ENCODE measurements at regions of chr14 and their contacts with region 1.

Region 1: GRCh38 chr14:103078093-103078749 is 5.8 kb upstream of the LBHD2 start:
- DNase-seq: peak; percentile 83
- H3K4me3 ChIP-seq: no peak overlapping the region
- H3K27ac ChIP-seq: no peak overlapping the region
- H3K4me1 ChIP-seq: peaks cover 4% of the 10 kb centered on the region
- CTCF ChIP-seq: peak; percentile 80

Region 2: DNA sequence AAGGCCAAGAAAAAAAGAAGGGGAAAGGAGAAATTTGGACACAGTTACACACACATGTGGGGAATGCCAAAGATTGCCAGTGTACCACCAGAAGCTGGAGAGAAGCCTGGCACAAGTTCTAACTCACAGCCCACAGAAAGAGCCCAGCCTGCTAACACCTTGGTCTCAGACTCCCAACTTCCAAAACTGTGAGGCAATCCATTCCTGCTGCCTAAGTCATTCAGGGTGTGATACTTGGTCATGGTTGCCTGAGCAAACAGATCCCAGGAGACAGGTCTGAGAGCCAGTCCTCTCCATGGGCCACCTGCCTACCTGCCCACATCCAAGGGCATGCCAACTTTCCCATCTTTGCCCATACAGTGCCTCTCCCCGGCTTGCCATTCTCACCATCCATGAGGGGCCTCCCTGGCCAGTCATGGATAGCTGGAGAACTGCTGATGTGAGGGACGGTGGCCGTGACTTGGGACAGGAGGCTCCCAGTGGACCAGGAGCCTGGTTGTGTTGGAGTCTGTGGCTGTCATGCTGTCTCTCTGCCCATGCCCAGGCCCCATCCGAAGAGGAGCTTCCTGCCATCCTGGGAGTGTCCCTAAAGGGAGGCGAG is 1976.7 kb before region 1 on chr14:
- CTCF ChIA-PET with region 1: no interaction called
- POLR2A ChIA-PET with region 1: no interaction called
- intact Hi-C with region 1: no loop called
- DNase-seq: no peak
- H3K4me3 ChIP-seq: no peak overlapping the region
- H3K27ac ChIP-seq: no peak overlapping the region
- H3K4me1 ChIP-seq: no peaks in the 10 kb centered on the region
- CTCF ChIP-seq: no peak

Region 3: GRCh38 chr14:103104654-103105452 is 26.6 kb after region 1 on chr14:
- CTCF ChIA-PET with region 1: interaction called, 5 read pairs
- POLR2A ChIA-PET with region 1: interaction called, 9 read pairs
- intact Hi-C with region 1: loop called (anchors 1 kb)
- DNase-seq: peak; percentile 66
- H3K4me3 ChIP-seq: peak overlapping the region; percentile 13
- H3K27ac ChIP-seq: peak overlapping the region; percentile 62
- H3K4me1 ChIP-seq: peaks cover 34% of the 10 kb centered on the region
- CTCF ChIP-seq: peak; percentile 92

Region 4: DNA sequence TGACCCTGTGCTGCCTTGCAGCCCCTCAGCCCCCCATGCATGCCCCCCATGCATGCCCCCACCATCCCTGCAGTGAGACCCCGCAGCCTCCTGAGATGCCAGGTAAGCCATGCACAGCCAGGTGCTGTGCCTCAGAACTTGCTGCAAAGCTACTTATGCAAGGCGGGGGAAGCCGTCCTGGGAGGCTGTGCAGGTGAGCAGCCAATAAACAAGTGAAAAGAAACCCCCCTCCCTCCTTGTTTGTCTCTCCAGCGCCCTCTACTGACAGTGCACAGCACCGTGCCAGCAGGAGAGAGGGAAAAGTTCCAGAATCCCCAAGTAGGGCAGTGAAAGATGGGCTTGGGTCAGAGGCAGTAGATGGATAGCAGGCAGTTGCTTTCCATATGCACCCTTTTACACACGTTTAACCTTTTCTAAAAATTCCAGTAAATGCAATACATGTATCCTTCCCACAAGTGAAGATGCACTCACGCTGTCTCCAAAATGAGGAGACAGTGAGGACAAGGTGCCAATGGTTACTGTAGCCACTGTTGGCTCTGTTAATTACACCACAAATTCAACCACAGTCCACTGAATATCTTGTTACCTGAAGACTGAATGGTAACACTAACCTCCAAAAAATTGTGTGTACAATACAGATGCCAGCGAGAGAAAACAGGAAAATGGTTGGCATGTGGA is 63.0 kb after region 1 on chr14:
- CTCF ChIA-PET with region 1: no interaction called
- POLR2A ChIA-PET with region 1: no interaction called
- intact Hi-C with region 1: loop called (anchors 1 kb)
- DNase-seq: peak; percentile 91
- H3K4me3 ChIP-seq: peak overlapping the region; percentile 58
- H3K27ac ChIP-seq: peak overlapping the region; percentile 91
- H3K4me1 ChIP-seq: peaks cover 34% of the 10 kb centered on the region
- CTCF ChIP-seq: peak; percentile 96

Region 5: DNA sequence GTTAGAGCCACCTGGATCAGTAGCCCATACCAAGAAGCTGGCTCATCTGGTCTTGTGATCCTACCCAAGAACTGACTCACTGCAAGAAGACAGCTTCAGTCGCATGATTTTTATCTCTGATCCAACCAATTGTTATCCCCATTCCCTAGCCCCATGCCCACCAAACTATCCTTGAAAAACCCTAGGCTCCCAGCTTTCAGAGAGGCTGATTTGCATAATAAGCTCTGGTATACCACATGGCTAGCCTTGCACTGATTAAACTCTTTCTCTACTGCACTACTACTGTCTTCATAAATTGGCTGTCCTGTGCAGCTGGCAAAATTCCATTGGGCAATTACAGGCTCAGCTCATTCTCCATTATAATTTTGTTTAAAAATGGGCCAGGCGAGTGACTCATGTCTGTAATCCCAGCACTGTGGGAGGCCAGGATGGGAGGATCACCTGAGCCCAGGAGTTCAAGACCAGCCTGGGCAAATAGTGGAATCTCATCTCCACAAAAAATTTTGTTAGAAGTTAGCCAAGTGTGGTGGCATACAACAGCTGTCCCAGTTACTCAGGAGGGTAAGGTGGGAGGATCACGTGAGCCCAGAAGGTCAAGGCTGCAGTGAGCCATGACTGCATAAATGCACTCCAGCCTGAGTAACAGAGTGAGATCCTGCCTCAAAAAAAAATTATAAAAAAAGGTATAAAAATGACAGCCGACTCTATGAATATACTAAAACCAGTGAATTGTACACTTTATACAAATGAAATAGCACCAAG is 179.2 kb after region 1 on chr14:
- CTCF ChIA-PET with region 1: no interaction called
- POLR2A ChIA-PET with region 1: no interaction called
- intact Hi-C with region 1: no loop called
- DNase-seq: no peak
- H3K4me3 ChIP-seq: no peak overlapping the region
- H3K27ac ChIP-seq: no peak overlapping the region
- H3K4me1 ChIP-seq: no peaks in the 10 kb centered on the region
- CTCF ChIP-seq: no peak

Region 6: GRCh38 chr14:103292426-103293374 is 214.5 kb after region 1 on chr14:
- CTCF ChIA-PET with region 1: no interaction called
- POLR2A ChIA-PET with region 1: no interaction called
- intact Hi-C with region 1: loop called (anchors 1 kb)
- DNase-seq: peak; percentile 63
- H3K4me3 ChIP-seq: no peak overlapping the region
- H3K27ac ChIP-seq: no peak overlapping the region
- H3K4me1 ChIP-seq: no peaks in the 10 kb centered on the region
- CTCF ChIP-seq: peak; percentile 87

Measured in OCI-LY7 (cell line).